Prostate gland (tissue), 2 donors: ENCODE measurements at regions of chr18 and their contacts with region 1.

Region 1: DNA sequence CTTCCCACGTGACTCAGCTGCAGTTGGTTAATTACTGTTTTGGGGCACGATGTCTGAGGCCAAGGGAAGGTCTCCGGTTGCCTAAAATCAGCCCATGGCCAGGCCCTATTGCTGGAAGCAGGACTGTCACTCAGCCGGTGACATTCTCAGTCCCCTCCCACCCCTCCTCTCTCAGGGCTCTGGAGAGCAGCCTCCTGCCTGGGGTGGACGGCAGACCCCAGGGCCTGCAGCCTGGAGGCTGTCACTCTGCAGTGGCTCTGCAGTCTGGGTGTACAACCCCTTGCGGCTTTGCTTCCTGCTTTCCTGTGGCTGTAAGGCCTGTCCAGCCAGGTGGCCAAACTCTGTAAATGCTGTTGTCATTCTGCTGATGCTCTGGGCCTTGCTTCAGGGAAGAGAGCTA is 32.8 kb downstream of the ZBTB7C start:
- DNase-seq: no peak
- H3K4me3 ChIP-seq: no peak overlapping the region
- H3K27ac ChIP-seq: no peak overlapping the region
- H3K4me1 ChIP-seq: no peaks in the 10 kb centered on the region
- H3K27me3 ChIP-seq: no peaks in the 10 kb centered on the region
- CTCF ChIP-seq: no peak
- POLR2A ChIP-seq: no peak

Region 2: GRCh38 chr18:48365965-48366364 is 10.4 kb before region 1 on chr18:
- intact Hi-C with region 1: loop called (anchors 1 kb)
- DNase-seq: no peak
- H3K4me3 ChIP-seq: no peak overlapping the region
- H3K27ac ChIP-seq: no peak overlapping the region
- H3K4me1 ChIP-seq: no peaks in the 10 kb centered on the region
- H3K27me3 ChIP-seq: no peaks in the 10 kb centered on the region
- CTCF ChIP-seq: no peak
- POLR2A ChIP-seq: no peak